ENCODE measurements at regions of chr3 and their contacts with region 1.

Region 1: GRCh38 chr3:98994128-98994762 is 92.8 kb upstream of the DCBLD2 start:
- DNase-seq: no peak
- H3K4me3 ChIP-seq: no peak overlapping the region
- H3K27ac ChIP-seq: no peak overlapping the region
- H3K4me1 ChIP-seq: no peaks in the 10 kb centered on the region
- H3K27me3 ChIP-seq: no peaks in the 10 kb centered on the region
- CTCF ChIP-seq: peak; percentile 61 to 74 (median 68)
- EP300 ChIP-seq: no peak
- POLR2A ChIP-seq: no peak

Region 2: DNA sequence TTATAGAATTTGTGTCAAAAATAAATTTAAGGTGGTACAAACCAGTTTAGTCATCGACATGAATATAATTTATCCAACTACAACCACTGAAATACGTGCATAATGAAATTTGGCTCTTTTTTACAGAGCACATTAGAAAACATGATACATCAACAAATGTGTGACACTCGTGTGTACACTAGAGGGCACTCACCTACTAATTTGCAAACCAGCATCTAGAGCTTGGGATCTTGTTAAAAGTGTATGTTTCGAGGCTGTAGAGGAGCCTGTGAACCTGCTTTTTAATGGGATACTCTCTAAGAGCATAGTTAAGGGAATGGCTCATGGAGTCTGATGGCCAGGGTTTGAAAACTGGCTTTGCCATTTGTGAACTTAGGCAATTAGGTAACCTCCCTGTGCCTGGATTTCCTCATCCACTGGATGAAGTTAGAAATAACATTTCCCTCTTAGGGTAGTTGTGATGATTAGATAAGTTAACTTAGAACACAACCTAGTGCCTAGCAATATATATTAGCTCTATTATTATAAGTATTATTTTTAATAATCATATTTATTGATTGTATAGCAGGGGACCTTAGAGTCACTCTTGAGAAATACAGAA is 392.1 kb before region 1 on chr3:
- intact Hi-C with region 1: loop called (anchors 10 kb)
- DNase-seq: no peak
- H3K4me3 ChIP-seq: no peak overlapping the region
- H3K27ac ChIP-seq: no peak overlapping the region
- H3K4me1 ChIP-seq: no peaks in the 10 kb centered on the region
- H3K27me3 ChIP-seq: no peaks in the 10 kb centered on the region
- CTCF ChIP-seq: peak; percentile 46 to 67 (median 51)
- EP300 ChIP-seq: no peak
- POLR2A ChIP-seq: no peak

Region 3: GRCh38 chr3:98901392-98902350 is 92.6 kb before region 1 on chr3 and contains the start of gene DCBLD2:
- intact Hi-C with region 1: loop called (anchors 10 kb)
- DNase-seq: peak; percentile 99
- H3K4me3 ChIP-seq: peak within 1 kb of the TSS; percentile 92 to 98 (median 93)
- H3K27ac ChIP-seq: peak within 1 kb of the TSS; percentile 93 to 97 (median 95)
- H3K4me1 ChIP-seq: peaks cover 10 to 40% (median 35%) of the 10 kb centered on the region in 4 donors
- H3K27me3 ChIP-seq: no peaks in the 10 kb centered on the region
- CTCF ChIP-seq: no peak
- EP300 ChIP-seq: no peak
- POLR2A ChIP-seq: peak; percentile 73
- total RNA-seq, gene DCBLD2: 37.3 to 48.4 (median 46.6) TPM

Region 4: GRCh38 chr3:99396651-99397261 is 402.5 kb after region 1 on chr3:
- intact Hi-C with region 1: no loop called
- DNase-seq: no peak
- H3K4me3 ChIP-seq: no peak overlapping the region
- H3K27ac ChIP-seq: no peak overlapping the region
- H3K4me1 ChIP-seq: peaks cover 0 to 13% (median 9%) of the 10 kb centered on the region in 4 donors
- H3K27me3 ChIP-seq: no peaks in the 10 kb centered on the region
- CTCF ChIP-seq: no peak
- EP300 ChIP-seq: no peak
- POLR2A ChIP-seq: no peak

Measured in esophagus muscularis mucosa (tissue), 4 donors.